PC-9 (cell line): ENCODE measurements at regions of chr10 and their contacts with region 1.

Region 1: GRCh38 chr10:21675157-21675796 is 141.2 kb downstream of the MLLT10 start:
- DNase-seq: peak in 1 of 2 experiments; percentile 3
- H3K4me3 ChIP-seq: no peak overlapping the region
- H3K27ac ChIP-seq: no peak overlapping the region
- H3K4me1 ChIP-seq: no peaks in the 10 kb centered on the region
- H3K27me3 ChIP-seq: no peaks in the 10 kb centered on the region
- CTCF ChIP-seq: peak; percentile 66

Region 2: GRCh38 chr10:21628023-21628422 is 47.3 kb before region 1 on chr10:
- CTCF ChIA-PET with region 1: interaction called, 12 read pairs
- POLR2A ChIA-PET with region 1: no interaction called
- intact Hi-C with region 1: no loop called
- DNase-seq: no peak
- H3K4me3 ChIP-seq: no peak overlapping the region
- H3K27ac ChIP-seq: no peak overlapping the region
- H3K4me1 ChIP-seq: no peaks in the 10 kb centered on the region
- H3K27me3 ChIP-seq: no peaks in the 10 kb centered on the region
- CTCF ChIP-seq: no peak

Region 3: GRCh38 chr10:21634599-21635365 is 40.5 kb before region 1 on chr10:
- CTCF ChIA-PET with region 1: interaction called, 12 read pairs
- POLR2A ChIA-PET with region 1: no interaction called
- intact Hi-C with region 1: no loop called
- DNase-seq: no peak
- H3K4me3 ChIP-seq: no peak overlapping the region
- H3K27ac ChIP-seq: no peak overlapping the region
- H3K4me1 ChIP-seq: no peaks in the 10 kb centered on the region
- H3K27me3 ChIP-seq: no peaks in the 10 kb centered on the region
- CTCF ChIP-seq: no peak

Region 4: GRCh38 chr10:21776883-21777282 is 101.6 kb after region 1 on chr10:
- CTCF ChIA-PET with region 1: no interaction called
- POLR2A ChIA-PET with region 1: no interaction called
- intact Hi-C with region 1: no loop called
- DNase-seq: no peak
- H3K4me3 ChIP-seq: no peak overlapping the region
- H3K27ac ChIP-seq: no peak overlapping the region
- H3K4me1 ChIP-seq: no peaks in the 10 kb centered on the region
- H3K27me3 ChIP-seq: no peaks in the 10 kb centered on the region
- CTCF ChIP-seq: no peak